CD4-positive, alpha-beta T cell (primary cell): ENCODE measurements at regions of chr7 and their contacts with region 1.

Region 1: DNA sequence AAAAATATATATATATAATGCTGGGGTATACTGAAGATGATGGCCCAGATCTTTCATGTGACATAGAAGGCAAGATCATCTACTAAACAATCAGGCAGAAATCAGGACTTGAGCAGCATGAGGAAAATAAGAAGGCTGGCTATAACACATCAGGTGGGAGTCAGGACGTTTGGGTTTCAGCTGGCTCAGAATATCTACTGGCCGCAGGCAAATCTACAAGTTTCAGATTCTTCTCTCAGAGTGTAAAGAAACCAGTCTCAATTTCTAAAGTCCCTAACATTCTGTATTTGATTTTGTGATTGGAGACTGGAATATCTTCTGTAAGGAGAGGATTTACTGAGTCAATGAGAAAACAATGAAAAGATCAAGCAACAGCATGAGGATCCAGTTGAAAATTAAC is 37.7 kb upstream of the FAM3C start:
- DNase-seq: no peak
- ATAC-seq: no peak
- H3K4me3 ChIP-seq: no peak overlapping the region
- H3K4me3 Mint-ChIP-seq: no peak overlapping the region
- H3K27ac ChIP-seq: no peak overlapping the region
- H3K27ac Mint-ChIP-seq: no peak overlapping the region
- H3K4me1 ChIP-seq: peaks cover 12% of the 10 kb centered on the region
- H3K4me1 Mint-ChIP-seq: peaks cover 12% of the 10 kb centered on the region
- H3K27me3 ChIP-seq: no peaks in the 10 kb centered on the region
- H3K27me3 Mint-ChIP-seq: no peaks in the 10 kb centered on the region
- CTCF ChIP-seq: no peak

Region 2: DNA sequence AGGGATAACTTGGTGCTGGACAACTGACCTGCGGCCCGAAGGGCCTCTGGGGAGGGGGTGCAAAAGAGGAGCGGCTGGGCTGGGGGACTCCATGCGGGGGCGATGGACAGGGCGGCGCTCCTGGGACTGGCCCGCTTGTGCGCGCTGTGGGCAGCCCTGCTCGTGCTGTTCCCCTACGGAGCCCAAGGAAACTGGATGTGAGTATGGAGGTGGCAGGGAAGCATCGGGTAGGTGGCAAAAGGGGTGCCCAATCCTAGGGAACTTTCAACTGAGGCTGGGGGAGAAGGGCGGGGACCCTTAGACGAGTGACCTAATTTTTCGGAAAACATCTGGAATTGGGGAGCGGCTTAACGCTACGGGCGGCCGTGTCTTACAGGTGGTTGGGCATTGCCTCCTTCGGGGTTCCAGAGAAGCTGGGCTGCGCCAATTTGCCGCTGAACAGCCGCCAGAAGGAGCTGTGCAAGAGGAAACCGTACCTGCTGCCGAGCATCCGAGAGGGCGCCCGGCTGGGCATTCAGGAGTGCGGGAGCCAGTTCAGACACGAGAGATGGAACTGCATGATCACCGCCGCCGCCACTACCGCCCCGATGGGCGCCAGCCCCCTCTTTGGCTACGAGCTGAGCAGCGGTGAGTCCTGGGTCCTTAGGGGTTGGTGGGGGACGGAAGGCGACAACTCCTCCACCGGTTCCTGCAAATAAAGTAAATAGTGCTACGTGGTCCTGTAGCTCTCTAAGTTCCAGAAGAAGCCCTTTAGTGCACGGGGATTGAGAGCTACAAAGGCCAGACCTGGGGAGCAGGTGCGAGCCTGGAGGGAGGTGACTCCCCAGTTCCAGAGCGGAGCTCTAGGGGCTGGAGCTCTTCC is 104.4 kb before region 1 on chr7:
- CTCF ChIA-PET with region 1: no interaction called
- POLR2A ChIA-PET with region 1: no interaction called
- intact Hi-C with region 1: no loop called
- DNase-seq: no peak
- ATAC-seq: no peak
- H3K4me3 ChIP-seq: no peak overlapping the region
- H3K4me3 Mint-ChIP-seq: no peak overlapping the region
- H3K27ac ChIP-seq: no peak overlapping the region
- H3K27ac Mint-ChIP-seq: no peak overlapping the region
- H3K4me1 ChIP-seq: peaks cover 20% of the 10 kb centered on the region
- H3K4me1 Mint-ChIP-seq: peaks cover 13% of the 10 kb centered on the region
- H3K27me3 ChIP-seq: peaks cover 35 to 57% of the 10 kb centered on the region in 2 experiments
- H3K27me3 Mint-ChIP-seq: peaks cover 74% of the 10 kb centered on the region
- CTCF ChIP-seq: no peak

Region 3: GRCh38 chr7:121401896-121402295 is 31.9 kb before region 1 on chr7:
- CTCF ChIA-PET with region 1: no interaction called
- POLR2A ChIA-PET with region 1: no interaction called
- intact Hi-C with region 1: loop called in 1 of 2 experiments (anchors 5 kb)
- DNase-seq: no peak
- ATAC-seq: no peak
- H3K4me3 ChIP-seq: no peak overlapping the region
- H3K4me3 Mint-ChIP-seq: no peak overlapping the region
- H3K27ac ChIP-seq: no peak overlapping the region
- H3K27ac Mint-ChIP-seq: no peak overlapping the region
- H3K4me1 ChIP-seq: no peaks in the 10 kb centered on the region
- H3K4me1 Mint-ChIP-seq: no peaks in the 10 kb centered on the region
- H3K27me3 ChIP-seq: no peaks in the 10 kb centered on the region
- H3K27me3 Mint-ChIP-seq: peaks cover 5% of the 10 kb centered on the region
- CTCF ChIP-seq: no peak